Pancreas (tissue), 10 donors: ENCODE measurements at regions of chr20 and their contacts with region 1.

Region 1: DNA sequence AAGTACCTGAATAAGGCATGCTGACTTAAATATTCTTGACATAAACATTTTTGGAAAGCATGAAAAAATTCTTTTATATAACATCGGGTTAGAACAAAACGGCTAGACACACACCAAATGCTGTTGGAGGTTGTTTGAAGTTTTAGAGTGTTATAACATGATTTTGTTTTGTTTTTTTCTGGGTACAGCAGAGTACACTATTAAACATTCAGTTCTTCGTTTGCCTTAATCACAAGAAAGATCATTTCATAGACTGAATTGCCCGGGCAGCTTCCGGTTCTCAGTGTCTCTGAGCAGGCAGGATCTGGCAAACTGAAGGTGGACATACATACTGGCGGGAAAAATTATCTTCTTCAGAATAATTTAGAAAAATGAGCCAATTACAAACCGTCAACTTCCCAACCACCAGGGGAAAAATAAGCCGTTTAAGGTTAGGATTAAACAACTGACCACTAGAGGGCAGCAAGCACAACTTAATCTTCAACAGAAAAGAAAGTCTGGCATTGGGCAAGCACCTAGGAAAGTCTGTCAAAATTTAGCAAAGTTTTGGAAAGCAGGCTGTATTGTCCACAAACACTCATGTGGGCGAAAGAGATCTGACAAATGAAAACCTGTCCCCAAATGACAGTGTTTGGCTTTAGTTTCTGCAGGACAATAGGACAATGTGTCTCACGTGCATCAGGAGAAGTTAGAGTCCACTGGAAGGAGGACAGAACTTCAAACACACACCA is 15.0 kb downstream of the ZNF217 start:
- DNase-seq: peak in 3 of 6 donors; percentile 57 to 70 (median 57)
- ATAC-seq: peak; percentile 81 to 87 (median 86)
- H3K4me3 ChIP-seq: no peak overlapping the region
- H3K27ac ChIP-seq: peak overlapping the region in 3 of 4 donors; percentile 16 to 80 (median 73)
- H3K4me1 ChIP-seq: peaks cover 16 to 38% (median 18%) of the 10 kb centered on the region in 3 donors
- H3K27me3 ChIP-seq: no peaks in the 10 kb centered on the region
- CTCF ChIP-seq: peak; percentile 82 to 89 (median 84)

Region 2: GRCh38 chr20:53408691-53409446 is 169.8 kb before region 1 on chr20:
- intact Hi-C with region 1: no loop called
- DNase-seq: no peak
- ATAC-seq: no peak
- H3K4me3 ChIP-seq: no peak overlapping the region
- H3K27ac ChIP-seq: no peak overlapping the region
- H3K4me1 ChIP-seq: peaks cover 0 to 3% (median 0%) of the 10 kb centered on the region in 3 donors
- H3K27me3 ChIP-seq: no peaks in the 10 kb centered on the region
- CTCF ChIP-seq: no peak

Region 3: DNA sequence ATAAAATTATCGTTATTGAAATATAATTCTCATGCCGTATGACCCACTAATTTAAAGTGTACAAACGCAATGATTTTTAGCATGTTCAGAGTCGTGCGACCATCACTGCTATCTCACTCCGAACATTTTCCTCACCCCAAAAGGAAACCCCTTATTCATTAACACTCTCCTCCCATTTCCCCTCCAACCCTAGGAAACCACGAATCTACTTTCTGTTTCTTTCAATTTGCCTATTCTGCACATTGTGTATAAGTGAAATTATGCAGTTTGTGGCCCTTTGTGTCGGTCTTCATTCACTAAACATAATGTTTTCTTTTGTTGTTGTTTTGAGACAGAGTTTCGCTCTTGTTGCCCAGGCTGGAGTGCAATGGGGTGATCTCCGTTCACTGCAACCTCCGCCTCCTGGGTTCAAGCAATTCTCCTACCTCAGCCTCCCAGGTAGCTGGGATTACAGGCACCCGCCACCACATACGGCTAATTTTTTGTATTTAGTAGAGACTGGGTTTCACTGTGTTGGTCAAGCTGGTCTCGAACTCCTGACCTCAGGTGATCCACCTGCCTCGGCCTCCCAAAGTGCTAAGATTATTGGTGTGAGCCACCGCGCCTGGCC is 114.7 kb after region 1 on chr20:
- intact Hi-C with region 1: no loop called
- DNase-seq: no peak
- ATAC-seq: no peak
- H3K4me3 ChIP-seq: no peak overlapping the region
- H3K27ac ChIP-seq: no peak overlapping the region
- H3K4me1 ChIP-seq: peaks cover 0 to 2% (median 0%) of the 10 kb centered on the region in 3 donors
- H3K27me3 ChIP-seq: no peaks in the 10 kb centered on the region
- CTCF ChIP-seq: no peak

Region 4: GRCh38 chr20:53869466-53870258 is 291.0 kb after region 1 on chr20:
- intact Hi-C with region 1: loop called in 1 of 3 experiments (anchors 10 kb)
- DNase-seq: peak in 5 of 6 donors; percentile 57 to 86 (median 76)
- ATAC-seq: peak; percentile 67 to 86 (median 80)
- H3K4me3 ChIP-seq: no peak overlapping the region
- H3K27ac ChIP-seq: peak overlapping the region; percentile 51 to 87 (median 74)
- H3K4me1 ChIP-seq: peaks cover 37 to 64% (median 55%) of the 10 kb centered on the region in 3 donors
- H3K27me3 ChIP-seq: no peaks in the 10 kb centered on the region
- CTCF ChIP-seq: peak; percentile 34 to 54 (median 51)

Region 5: DNA sequence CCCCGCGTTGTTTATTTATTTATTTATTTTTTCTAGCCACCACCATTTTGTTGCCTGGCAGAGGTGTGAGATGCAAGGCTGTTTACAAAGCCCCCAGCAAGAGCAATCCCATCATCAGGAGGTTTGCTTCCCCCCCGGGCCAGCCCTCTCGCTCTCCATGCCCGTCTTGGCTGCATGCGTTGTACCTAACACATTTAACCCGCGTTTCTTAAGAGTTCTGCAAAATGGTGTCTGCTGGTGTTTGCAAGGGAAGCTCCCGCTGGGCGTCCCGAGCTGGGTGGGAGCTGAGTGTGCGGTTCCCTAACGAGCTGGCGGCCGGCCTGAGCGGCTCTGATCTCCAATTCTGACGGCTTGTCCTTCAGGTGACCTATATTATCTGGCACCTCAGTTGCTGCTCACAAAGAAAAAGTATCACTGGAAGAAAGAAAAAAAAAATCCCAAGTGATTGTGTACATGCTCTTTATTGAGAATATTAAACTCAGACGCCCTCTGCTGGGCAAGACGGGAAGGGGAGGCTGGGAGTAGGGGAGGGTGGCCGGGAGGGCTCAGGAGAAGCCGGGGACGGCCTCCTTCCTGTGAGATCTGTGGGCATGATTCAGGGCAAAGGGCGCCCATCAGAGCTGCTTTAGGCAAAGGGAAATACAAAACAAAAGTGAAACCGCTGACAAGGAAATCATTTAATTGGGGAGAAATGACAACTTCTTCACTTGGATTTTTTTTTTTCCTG is 337.0 kb after region 1 on chr20:
- intact Hi-C with region 1: loop called in 2 of 3 experiments (anchors 5 to 10 kb)
- DNase-seq: peak; percentile 86 to 99 (median 92)
- ATAC-seq: peak; percentile 93 to 97 (median 94)
- H3K4me3 ChIP-seq: peak overlapping the region; percentile 26 to 61 (median 40)
- H3K27ac ChIP-seq: peak overlapping the region; percentile 21 to 87 (median 82)
- H3K4me1 ChIP-seq: peaks cover 0 to 12% (median 0%) of the 10 kb centered on the region in 3 donors
- H3K27me3 ChIP-seq: no peaks in the 10 kb centered on the region
- CTCF ChIP-seq: peak; percentile 80 to 86 (median 86)

Region 6: DNA sequence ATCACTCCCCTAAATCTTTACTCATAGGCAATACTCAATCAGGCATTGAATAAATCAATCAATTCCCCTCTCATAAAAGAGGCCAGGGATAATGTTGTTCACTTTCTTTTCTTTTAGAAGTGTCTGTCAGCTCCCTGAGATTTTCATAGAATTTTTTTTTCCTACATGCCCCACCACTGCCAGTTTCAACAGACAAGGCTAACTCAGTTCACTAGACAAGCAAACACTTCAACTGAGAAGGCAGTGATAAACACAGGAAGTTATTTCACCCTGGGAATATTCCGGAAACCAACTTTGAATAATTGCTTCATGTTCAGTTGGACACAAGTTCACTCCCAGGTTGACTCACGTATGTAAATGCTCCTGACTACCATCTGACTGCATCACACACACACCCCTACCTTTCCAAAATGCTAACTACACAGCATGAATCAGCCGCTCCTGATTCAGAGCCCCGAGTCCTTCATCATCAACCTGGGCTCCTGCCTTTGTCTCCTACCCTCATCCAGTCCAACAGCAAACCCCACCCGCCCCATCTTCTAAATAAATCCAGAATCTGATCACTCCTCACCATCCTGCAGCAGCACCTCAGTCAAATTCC is 347.9 kb after region 1 on chr20:
- intact Hi-C with region 1: loop called in 1 of 3 experiments (anchors 10 kb)
- DNase-seq: peak in 1 of 6 donors; percentile 39
- ATAC-seq: peak; percentile 72 to 87 (median 85)
- H3K4me3 ChIP-seq: no peak overlapping the region
- H3K27ac ChIP-seq: peak overlapping the region in 2 of 4 donors; percentile 50 to 80
- H3K4me1 ChIP-seq: peaks cover 0 to 9% (median 5%) of the 10 kb centered on the region in 3 donors
- H3K27me3 ChIP-seq: no peaks in the 10 kb centered on the region
- CTCF ChIP-seq: no peak

Region 7: GRCh38 chr20:54257071-54257840 is 678.6 kb after region 1 on chr20:
- intact Hi-C with region 1: no loop called
- DNase-seq: no peak
- ATAC-seq: peak in 2 of 4 donors; percentile 53 to 64
- H3K4me3 ChIP-seq: no peak overlapping the region
- H3K27ac ChIP-seq: no peak overlapping the region
- H3K4me1 ChIP-seq: no peaks in the 10 kb centered on the region
- H3K27me3 ChIP-seq: no peaks in the 10 kb centered on the region
- CTCF ChIP-seq: no peak

Region 8: GRCh38 chr20:54818166-54818527 is 1239.5 kb after region 1 on chr20:
- intact Hi-C with region 1: no loop called
- DNase-seq: no peak
- ATAC-seq: no peak
- H3K4me3 ChIP-seq: no peak overlapping the region
- H3K27ac ChIP-seq: no peak overlapping the region
- H3K4me1 ChIP-seq: no peaks in the 10 kb centered on the region
- H3K27me3 ChIP-seq: peaks cover 0 to 3% (median under 1%) of the 10 kb centered on the region in 4 donors
- CTCF ChIP-seq: no peak